HEK293 (cell line): ENCODE measurements at regions of chr18 and their contacts with region 1.

Region 1: DNA sequence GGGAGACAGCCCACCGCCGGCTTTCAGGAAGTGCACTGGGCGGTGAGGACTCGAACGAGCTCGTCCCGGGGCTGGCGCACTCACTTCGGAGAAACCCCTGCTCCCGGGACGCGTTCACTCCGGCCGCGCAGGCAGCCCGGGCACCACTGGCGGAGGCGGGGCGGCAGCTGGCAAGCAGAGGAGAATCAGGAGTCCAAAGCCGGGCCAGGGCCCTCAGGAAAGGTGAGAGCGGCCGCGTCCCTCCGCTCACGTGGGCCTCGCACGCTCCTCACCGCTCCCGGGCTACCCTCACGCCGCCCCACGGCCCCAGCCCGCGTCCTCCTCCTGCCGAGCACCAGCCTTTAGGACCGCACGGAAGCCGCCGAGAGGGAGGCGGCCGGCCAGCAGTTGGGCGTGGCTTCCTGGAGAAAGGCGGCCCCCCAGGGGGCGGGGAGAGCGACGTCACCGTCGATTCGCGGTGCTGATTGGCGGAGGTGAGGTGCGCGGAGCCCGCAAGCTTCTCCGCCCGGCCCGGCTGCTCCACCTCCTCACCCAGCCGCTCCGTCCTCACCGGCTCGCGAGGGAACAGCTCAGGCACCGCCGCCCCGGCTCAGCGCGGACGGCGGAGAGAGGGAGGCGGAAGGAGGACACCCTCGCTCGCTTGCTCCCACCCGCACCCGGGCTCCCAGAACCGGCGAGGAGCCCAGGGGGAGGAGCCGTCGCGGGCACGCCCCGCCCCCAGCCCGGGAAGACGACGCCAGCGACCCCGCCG is at the start of gene ZCCHC2:
- H3K4me3 ChIP-seq: peak within 1 kb of the TSS; percentile 62
- H3K27ac ChIP-seq: peak within 1 kb of the TSS; percentile 97
- H3K4me1 ChIP-seq: peaks cover 15% of the 10 kb centered on the region
- CTCF ChIP-seq: no peak

Region 2: DNA sequence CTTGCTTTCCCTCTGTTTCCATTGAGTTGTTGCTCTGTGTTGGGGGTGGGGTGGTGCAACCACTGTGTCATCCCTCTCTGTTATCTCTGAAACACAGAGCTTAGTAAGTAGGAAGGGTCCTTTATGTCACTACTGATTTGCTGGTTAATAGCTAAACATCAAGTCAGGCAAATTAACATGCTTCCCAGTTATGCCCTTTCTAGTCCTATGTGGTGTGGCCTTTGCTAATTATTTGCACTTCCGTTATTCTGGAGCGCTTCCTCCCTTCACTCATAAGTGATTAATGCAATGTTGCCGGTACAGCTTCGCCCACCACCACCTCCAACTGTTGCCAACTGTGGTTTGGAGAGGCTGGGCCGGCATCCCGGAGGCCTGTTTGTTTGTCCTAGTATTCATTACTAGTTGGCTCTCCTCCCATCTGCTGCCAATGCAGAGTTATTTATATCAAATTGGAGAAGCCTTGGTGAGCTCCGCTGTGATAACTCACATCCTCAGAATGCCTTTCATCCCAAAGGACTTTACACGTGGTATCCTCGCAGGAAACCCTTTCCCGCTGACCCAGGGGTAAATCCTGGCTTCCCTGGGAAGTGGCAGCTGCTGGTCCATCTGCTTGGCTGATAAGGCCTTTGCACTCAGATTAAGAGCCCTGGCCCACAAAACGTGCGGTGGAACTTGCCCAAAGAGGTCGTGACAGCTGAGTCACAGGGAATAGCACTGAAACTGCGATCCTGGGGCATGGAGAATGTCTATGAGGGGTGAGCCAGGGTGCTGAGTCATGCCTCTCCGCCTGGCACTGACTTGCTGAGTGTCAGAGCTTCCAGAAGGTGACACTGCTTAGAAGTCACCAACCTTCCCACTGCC is 71.9 kb before region 1 on chr18:
- CTCF ChIA-PET with region 1: no interaction called
- POLR2A ChIA-PET with region 1: interaction called, 10 read pairs
- H3K4me3 ChIP-seq: no peak overlapping the region
- H3K27ac ChIP-seq: no peak overlapping the region; the same call in 1 of the 2 replicates
- H3K4me1 ChIP-seq: peaks cover 9% of the 10 kb centered on the region
- CTCF ChIP-seq: no peak

Region 3: DNA sequence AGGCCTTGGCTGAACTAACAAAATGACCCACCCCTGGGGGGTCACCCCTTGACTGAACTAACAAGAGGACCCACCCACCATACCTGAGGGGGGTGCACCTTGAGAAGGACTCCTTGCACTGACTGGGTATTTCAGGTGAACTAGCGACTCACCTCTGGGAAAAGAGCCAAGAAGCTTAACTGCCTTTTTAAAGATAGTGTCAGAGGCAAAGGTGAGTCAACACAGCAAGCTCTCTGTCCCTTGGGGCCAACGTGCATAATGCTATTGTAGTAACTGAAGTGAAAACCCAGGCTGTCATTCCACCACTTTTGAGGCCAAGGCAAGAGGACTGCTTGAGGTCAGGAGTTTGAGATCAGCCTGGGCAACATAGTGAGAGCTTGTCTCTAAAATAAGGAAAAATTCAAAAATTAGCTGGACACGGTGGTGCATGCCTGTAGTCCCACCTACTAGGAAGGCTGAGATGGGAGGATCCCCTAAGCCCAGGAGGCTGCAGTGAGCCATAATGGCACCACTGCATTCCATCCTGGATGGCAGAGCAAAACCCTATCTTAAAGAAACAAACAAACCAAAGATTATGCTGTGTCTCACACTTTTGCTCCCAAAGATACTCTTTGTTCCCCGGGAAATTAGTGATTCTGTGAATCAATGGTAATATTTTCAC is 36.2 kb before region 1 on chr18:
- CTCF ChIA-PET with region 1: interaction called, 3 read pairs
- POLR2A ChIA-PET with region 1: interaction called, 10 read pairs
- H3K4me3 ChIP-seq: no peak overlapping the region
- H3K27ac ChIP-seq: no peak overlapping the region; the same call in 1 of the 2 replicates
- H3K4me1 ChIP-seq: peaks cover 11% of the 10 kb centered on the region
- CTCF ChIP-seq: no peak

Region 4: DNA sequence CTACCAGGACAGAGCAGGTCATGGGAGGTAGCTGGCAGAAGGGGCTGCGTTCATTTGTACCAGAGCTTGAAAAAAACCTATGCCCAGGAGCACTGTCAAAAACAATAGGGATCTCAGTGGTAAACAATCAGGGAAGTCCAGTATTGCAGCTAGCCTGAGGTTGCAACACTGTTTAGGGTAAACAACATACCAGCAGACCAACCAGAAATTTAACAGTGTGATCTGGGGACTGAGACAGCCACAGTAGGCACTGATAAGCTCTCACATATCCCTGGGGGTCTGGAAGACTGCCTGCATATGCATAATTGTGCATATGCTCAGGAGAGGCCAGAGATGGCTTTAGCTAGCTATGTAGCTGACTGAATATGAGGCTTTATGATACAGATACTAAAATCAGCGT is 11.9 kb before region 1 on chr18:
- CTCF ChIA-PET with region 1: interaction called, 16 read pairs
- POLR2A ChIA-PET with region 1: interaction called, 18 read pairs
- H3K4me3 ChIP-seq: no peak overlapping the region
- H3K27ac ChIP-seq: no peak overlapping the region
- H3K4me1 ChIP-seq: no peaks in the 10 kb centered on the region
- CTCF ChIP-seq: no peak